K562 (cell line): ENCODE measurements at regions of chr1 and their contacts with region 1.

Region 1: GRCh38 chr1:43156026-43156425 is 16.1 kb downstream of the EBNA1BP2 start:
- DNase-seq: no peak
- ATAC-seq: peak; percentile 65
- H3K4me3 ChIP-seq: no peak overlapping the region
- H3K27ac ChIP-seq: no peak overlapping the region
- H3K4me1 ChIP-seq: no peaks in the 10 kb centered on the region; a peak in 1 of 5 replicates
- H3K27me3 ChIP-seq: peaks cover 24 to 26% of the 10 kb centered on the region in 2 experiments
- CTCF ChIP-seq: no peak
- EP300 ChIP-seq: no peak
- POLR2A ChIP-seq: no peak
- RAD21 ChIP-seq: no peak

Region 2: GRCh38 chr1:43171876-43172526 is 16.0 kb after region 1 on chr1 and contains the starts of genes CFAP57 and EBNA1BP2:
- CTCF ChIA-PET with region 1: no interaction called
- POLR2A ChIA-PET with region 1: interaction called, 21 read pairs
- in situ Hi-C with region 1: no loop called
- intact Hi-C with region 1: no loop called
- DNase-seq: peak; percentile 89 to 97 (median 92)
- ATAC-seq: peak; percentile 96
- H3K4me3 ChIP-seq: peak within 1 kb of the TSS; percentile 83
- H3K27ac ChIP-seq: peak within 1 kb of the TSS; percentile 76
- H3K4me1 ChIP-seq: peaks cover 8 to 10% of the 10 kb centered on the region in 2 experiments; a peak in 4 of 5 replicates
- H3K27me3 ChIP-seq: peaks cover 6 to 10% of the 10 kb centered on the region in 2 experiments; a peak in 3 of 5 replicates
- CTCF ChIP-seq: no peak
- EP300 ChIP-seq: no peak
- POLR2A ChIP-seq: peak; percentile 91
- RAD21 ChIP-seq: no peak
- polyA plus RNA-seq, gene CFAP57: 0.07 TPM in 1 of 2 experiments, not detected in the other
- polyA plus RNA-seq, gene EBNA1BP2: 95.2 to 157 TPM